GM10248 (cell line): ENCODE measurements at regions of chr16 and their contacts with region 1.

Region 1: DNA sequence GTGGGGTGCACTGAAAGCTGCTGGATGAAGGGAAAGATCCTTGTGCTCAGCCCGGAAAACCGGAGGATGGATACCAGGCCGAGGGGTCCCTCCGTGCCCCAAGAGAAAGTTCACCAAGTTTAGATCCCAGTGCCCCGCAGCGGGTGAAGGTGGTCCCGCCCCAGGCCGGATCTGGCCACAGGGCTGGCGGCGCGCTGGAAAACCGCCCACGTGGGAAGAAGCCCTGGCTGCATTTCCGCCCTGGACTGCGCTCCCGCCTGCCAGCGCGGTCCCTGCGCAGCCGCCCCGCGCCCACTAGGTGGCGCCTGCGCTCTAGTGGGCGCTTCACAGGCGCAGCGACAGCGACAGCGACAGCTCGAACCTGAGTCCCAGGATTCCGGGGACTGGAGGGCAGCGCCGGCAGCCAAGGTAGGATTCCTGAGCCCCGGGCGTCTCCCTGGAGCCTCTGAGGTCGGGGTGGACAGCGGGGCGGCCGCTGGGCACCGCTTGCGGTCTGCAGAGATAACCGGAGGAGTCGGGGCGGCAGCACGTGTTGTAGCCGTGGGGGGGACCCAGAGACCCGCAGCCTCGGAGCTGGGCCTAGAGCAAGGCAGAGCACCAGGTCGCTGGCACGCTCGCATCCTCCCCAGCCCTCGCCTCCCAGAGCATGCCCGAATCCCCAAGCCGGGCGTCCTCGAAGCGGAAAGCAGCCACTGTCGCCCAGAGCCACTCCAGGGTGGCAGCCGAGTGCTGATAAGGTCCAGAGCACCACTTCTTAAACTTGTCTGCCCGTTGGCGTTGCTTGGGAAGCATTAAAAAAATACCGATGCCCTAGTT is at the start of gene CHD9:
- DNase-seq: peak; percentile 90
- CTCF ChIP-seq: peak; percentile 99

Region 2: DNA sequence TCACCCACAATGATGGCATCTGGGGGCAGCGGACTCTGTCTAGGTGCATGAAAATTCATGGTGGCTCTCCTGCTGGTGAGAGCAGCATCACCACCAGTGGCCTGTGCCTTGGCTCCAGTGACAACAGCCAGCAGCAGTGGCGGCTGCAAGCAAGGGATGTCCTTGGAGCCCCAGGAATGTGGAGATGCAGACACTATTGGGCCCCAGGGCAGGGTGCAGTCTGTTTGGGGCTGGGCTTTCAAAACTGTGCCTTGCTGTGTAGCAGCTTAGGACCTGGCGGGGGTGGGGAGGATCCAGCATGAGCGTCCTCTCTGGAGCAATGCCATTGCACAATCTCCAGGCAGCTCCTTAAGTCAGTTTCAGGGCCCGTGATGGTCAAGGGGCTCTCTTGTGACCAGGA is 201.9 kb before region 1 on chr16:
- CTCF ChIA-PET with region 1: no interaction called
- POLR2A ChIA-PET with region 1: no interaction called
- DNase-seq: no peak
- CTCF ChIP-seq: no peak

Region 3: GRCh38 chr16:53065461-53066061 is 10.7 kb after region 1 on chr16:
- CTCF ChIA-PET with region 1: interaction called, 31 read pairs
- POLR2A ChIA-PET with region 1: interaction called, 3 read pairs
- DNase-seq: no peak
- CTCF ChIP-seq: no peak

Region 4: DNA sequence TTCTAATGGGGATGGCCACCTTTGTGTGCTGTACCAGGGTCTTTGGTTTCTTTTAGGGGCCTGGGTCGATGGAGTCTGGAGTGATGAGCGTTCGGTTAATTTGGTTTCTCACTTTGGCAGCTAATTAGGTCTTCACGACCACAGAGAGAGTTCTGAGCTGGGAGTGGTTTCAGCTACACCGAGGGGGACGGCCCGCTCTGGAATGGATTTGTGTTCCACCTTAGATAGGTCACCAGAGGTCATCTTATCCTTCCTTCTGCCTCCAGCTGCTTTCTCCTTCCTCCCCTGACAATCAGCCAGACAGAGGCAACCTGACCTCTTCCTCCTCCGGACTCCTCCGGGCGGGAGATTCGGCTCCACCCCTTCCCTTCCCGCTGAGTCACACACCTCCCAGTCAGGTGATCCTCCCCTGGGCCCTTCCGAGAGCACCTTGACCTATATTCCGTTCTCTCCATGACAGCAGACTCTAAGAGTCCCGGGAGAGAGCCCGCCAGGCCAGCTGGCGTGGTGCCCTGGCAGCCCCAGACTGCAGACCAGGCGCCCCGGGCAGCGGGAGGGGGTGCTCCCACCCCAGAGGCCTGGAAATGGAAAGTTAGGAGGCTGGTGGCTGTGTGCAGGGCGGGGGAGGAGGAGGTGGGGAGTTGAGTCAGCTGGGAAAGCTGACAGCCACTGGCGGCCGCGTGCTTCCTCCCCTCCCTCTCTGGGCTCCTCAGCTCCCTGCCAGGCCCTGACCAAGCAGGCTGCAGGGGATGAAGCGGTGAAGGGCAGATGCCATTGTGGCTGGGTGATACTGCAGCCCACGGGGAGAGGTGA is 44.6 kb after region 1 on chr16:
- CTCF ChIA-PET with region 1: interaction called, 19 read pairs
- POLR2A ChIA-PET with region 1: interaction called, 8 read pairs
- DNase-seq: peak; percentile 65
- CTCF ChIP-seq: no peak

Region 5: DNA sequence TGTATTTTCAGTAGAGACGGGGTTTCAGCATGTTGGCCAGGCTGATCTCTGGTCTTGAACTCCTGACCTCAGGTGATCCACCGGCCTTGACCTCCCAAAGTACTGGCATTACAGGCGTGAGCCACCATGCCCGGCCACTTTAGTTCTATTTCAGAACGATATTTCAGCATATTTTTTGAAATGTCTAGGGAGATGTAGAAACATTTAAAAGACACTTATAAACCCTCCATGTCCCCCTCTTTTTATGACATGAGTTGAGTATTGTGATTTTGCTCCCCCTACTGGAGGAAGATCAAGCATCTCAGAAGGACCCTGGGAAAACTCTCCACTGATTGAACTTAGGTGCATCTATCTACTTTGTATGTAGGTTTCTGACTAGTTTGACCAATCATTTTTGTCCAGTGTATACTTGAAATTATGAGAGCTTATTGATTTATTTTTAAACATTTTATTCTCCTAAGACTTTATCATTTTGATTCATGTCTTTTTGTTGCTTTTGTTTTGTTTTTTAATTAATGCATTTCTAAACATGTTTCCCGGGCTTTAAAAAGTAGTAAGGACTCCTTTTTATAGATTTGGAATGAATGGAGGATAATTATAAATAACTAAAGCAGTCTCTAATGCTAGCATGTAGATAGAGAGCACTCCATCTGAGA is 105.0 kb after region 1 on chr16:
- CTCF ChIA-PET with region 1: interaction called, 36 read pairs
- POLR2A ChIA-PET with region 1: no interaction called
- DNase-seq: peak; percentile 47
- CTCF ChIP-seq: peak; percentile 49

Region 6: GRCh38 chr16:53220585-53220984 is 165.7 kb after region 1 on chr16:
- CTCF ChIA-PET with region 1: interaction called, 20 read pairs
- POLR2A ChIA-PET with region 1: interaction called, 3 read pairs
- DNase-seq: no peak
- CTCF ChIP-seq: no peak